Caco-2 (cell line): ENCODE measurements at regions of chrX and their contacts with region 1.

Region 1: GRCh38 chrX:7316887-7317286 is 168.9 kb upstream of the PUDP start:
- DNase-seq: no peak
- H3K4me3 ChIP-seq: no peak overlapping the region
- H3K4me3 Mint-ChIP-seq: no peak overlapping the region
- H3K27ac Mint-ChIP-seq: no peak overlapping the region
- H3K4me1 ChIP-seq: no peaks in the 10 kb centered on the region
- H3K4me1 Mint-ChIP-seq: no peaks in the 10 kb centered on the region
- H3K27me3 ChIP-seq: no peaks in the 10 kb centered on the region
- H3K27me3 Mint-ChIP-seq: no peaks in the 10 kb centered on the region
- CTCF ChIP-seq: no peak

Region 2: DNA sequence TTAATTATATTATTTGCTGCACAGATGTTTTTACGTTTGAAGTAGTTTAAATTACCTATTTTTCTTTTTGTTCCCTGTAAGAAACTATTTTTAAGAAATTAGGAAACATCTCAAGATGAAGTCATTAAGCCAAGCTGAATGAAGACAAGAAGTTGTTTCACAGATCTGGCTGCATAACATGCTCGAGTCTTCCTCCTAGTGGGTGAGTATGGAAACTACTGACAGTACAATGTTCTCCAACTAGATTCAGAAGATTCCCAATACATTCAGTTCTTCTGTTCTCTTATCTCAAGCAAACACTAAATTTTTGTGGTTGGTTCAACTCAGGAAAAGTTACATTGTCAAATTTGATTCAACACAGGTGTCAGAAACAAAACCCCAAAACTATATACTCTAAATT is 269.2 kb after region 1 on chrX:
- CTCF ChIA-PET with region 1: no interaction called
- POLR2A ChIA-PET with region 1: no interaction called
- intact Hi-C with region 1: loop called (anchors 10 kb)
- DNase-seq: peak in 1 of 2 experiments; percentile 13
- H3K4me3 ChIP-seq: no peak overlapping the region
- H3K4me3 Mint-ChIP-seq: no peak overlapping the region
- H3K27ac Mint-ChIP-seq: no peak overlapping the region
- H3K4me1 ChIP-seq: no peaks in the 10 kb centered on the region
- H3K4me1 Mint-ChIP-seq: no peaks in the 10 kb centered on the region
- H3K27me3 ChIP-seq: no peaks in the 10 kb centered on the region
- H3K27me3 Mint-ChIP-seq: no peaks in the 10 kb centered on the region
- CTCF ChIP-seq: peak in 1 of 2 experiments; percentile 58